Activated CD4-positive, alpha-beta T cell treated with anti-CD3 and anti-CD28 coated beads for 36 hours (primary cell): ENCODE measurements at regions of chr10 and their contacts with region 1.

Region 1: GRCh38 chr10:117216611-117217195 is 19.4 kb downstream of the KCNK18 start:
- DNase-seq: peak; percentile 83
- ATAC-seq: peak; percentile 88
- H3K4me3 Mint-ChIP-seq: peak overlapping the region; percentile 63
- H3K27ac Mint-ChIP-seq: no peak overlapping the region
- H3K4me1 Mint-ChIP-seq: peaks cover 3% of the 10 kb centered on the region
- H3K27me3 Mint-ChIP-seq: peaks cover 26% of the 10 kb centered on the region

Region 2: GRCh38 chr10:117237401-117237991 is 20.8 kb after region 1 on chr10:
- CTCF ChIA-PET with region 1: interaction called, 10 read pairs
- POLR2A ChIA-PET with region 1: no interaction called
- intact Hi-C with region 1: no loop called
- DNase-seq: no peak
- ATAC-seq: no peak
- H3K4me3 Mint-ChIP-seq: no peak overlapping the region
- H3K27ac Mint-ChIP-seq: no peak overlapping the region
- H3K4me1 Mint-ChIP-seq: peaks cover 4% of the 10 kb centered on the region
- H3K27me3 Mint-ChIP-seq: peaks cover 17% of the 10 kb centered on the region

Region 3: GRCh38 chr10:117320050-117320665 is 103.5 kb after region 1 on chr10:
- CTCF ChIA-PET with region 1: interaction called, 92 read pairs
- POLR2A ChIA-PET with region 1: no interaction called
- intact Hi-C with region 1: loop called (anchors 1 kb)
- DNase-seq: no peak
- ATAC-seq: no peak
- H3K4me3 Mint-ChIP-seq: no peak overlapping the region
- H3K27ac Mint-ChIP-seq: no peak overlapping the region
- H3K4me1 Mint-ChIP-seq: no peaks in the 10 kb centered on the region
- H3K27me3 Mint-ChIP-seq: no peaks in the 10 kb centered on the region

Region 4: DNA sequence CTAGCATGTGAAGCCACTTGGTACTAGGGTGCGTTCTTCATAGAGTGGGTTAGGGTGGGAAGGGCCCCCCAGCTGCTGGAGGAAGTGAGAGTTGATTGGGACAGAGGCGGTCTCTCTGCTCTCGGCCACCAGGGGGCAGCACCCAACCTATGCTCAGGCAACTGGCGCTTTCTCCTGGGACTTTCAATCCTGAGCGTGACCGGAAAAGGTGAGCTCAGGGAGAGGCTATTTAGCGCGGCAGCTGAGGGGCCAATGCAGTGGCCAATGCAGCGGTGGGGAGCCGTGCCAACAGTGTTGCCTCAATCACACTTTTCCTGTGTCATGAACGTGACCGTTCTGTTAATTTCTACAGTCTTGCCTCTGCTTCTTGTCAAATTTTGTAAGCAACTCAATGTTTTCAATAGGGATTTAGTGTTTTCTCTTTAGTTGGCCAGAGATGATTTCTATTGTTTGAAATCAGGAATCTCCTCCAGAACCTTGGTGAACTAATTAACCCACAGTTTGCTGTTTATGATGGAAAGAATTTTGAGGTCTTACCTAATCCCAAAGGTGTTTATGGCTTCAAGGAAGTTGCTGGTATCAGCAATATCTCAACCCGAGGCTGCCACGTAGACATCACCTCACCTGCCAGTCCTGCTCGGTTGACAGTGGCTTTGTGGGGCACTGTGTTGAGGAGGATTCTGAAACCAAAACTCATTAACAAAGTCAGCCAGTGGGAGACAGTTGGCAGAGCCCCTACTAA is 226.4 kb after region 1 on chr10:
- CTCF ChIA-PET with region 1: interaction called, 4 read pairs
- POLR2A ChIA-PET with region 1: no interaction called
- intact Hi-C with region 1: loop called in 1 of 2 experiments (anchors 5 kb)
- DNase-seq: peak; percentile 81
- ATAC-seq: peak; percentile 63
- H3K4me3 Mint-ChIP-seq: no peak overlapping the region
- H3K27ac Mint-ChIP-seq: no peak overlapping the region
- H3K4me1 Mint-ChIP-seq: peaks cover 6% of the 10 kb centered on the region
- H3K27me3 Mint-ChIP-seq: peaks cover 15% of the 10 kb centered on the region

Region 5: DNA sequence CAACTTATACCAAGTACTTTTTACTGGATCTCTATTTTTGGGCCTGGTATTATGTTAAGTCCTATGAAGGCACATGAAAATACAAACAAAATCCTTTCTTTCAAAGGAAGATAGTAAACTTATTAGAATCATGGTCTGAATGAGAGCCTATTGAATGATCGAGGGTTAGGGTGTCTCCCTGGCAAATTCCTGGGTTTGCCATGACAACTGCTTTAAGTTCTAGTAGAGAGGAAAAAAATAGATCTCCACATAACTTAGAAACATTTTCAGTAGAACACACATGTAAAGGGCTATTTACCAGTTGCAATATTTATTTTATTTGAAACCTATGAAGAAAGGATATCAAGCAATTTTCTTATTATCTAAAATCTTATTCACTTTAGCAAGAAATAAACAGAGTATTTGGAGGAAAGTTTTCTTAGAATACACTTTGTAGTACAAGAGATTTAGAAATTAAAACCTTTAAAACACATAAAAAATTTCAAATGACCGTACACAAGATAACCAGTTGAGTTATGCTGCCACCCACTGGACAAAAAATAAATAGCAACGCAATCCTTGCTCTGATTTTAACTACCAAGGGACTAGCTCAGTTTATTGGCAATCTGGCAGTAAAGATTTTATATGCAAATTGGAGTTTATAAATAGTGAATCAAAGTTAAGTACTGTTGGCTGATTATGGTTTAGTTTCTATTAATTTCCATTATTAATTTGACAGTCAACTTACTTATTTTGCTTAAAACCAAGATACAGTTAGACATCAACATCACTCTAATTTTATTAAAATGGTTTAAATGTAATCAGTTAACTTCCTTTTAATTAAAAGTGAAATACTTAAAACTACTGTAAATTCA is 1504.2 kb after region 1 on chr10:
- CTCF ChIA-PET with region 1: no interaction called
- POLR2A ChIA-PET with region 1: no interaction called
- intact Hi-C with region 1: no loop called
- DNase-seq: peak; percentile 69
- ATAC-seq: peak; percentile 71
- H3K4me3 Mint-ChIP-seq: no peak overlapping the region
- H3K27ac Mint-ChIP-seq: no peak overlapping the region
- H3K4me1 Mint-ChIP-seq: peaks cover 6% of the 10 kb centered on the region
- H3K27me3 Mint-ChIP-seq: no peaks in the 10 kb centered on the region